ENCODE measurements at regions of chr12 and their contacts with region 1.

Region 1: DNA sequence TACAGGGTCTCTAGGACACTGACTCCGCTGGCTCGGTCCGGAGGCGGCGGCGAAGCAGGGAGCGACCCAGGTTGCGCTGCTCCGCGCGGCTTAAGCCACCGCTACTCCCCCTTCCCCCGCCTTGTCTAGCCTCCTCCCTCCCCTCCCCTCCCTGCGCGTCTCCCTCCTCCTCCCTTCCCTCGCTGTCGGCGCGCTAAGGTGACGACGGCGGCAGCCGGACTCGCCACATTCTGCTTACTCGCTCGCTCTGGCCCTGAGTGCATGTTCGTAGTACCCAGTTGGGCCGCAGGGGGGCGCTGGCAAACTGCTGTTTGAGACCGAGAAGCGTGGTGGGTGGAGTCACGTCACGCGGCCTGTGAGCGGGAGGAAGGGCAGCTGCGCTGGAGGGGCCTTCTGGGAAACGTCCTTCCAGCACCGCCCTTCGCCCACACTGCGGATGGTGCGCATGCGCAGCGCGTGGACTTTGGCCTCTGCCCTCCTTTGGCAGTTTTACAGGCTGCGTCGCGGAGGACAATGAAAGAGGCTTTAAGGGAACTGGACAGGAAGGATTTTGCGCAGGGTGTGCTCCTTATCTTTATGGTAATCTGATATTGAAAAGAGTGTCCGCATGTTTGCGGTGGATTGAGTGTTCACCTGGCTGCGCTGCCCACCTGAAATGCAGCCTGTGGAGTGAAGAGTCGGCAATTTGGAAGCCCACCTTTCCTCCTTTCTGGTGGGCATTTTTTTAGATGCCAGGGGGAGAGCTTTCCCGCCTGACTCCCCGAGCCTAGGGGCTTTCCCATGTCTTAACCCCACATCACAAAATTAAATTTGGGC is at the start of gene SCAF11:
- DNase-seq: peak; percentile 100
- ATAC-seq: peak; percentile 86 to 92 (median 90)
- H3K4me3 ChIP-seq: peak within 1 kb of the TSS; percentile 87
- H3K27ac ChIP-seq: peak within 1 kb of the TSS; percentile 99
- H3K4me1 ChIP-seq: peaks cover 34% of the 10 kb centered on the region
- H3K27me3 ChIP-seq: no peaks in the 10 kb centered on the region
- CTCF ChIP-seq: peak; percentile 91
- total RNA-seq, gene SCAF11: 63.5 to 90.0 (median 75.9) TPM

Region 2: GRCh38 chr12:46450279-46450748 is 459.6 kb after region 1 on chr12:
- intact Hi-C with region 1: loop called in 1 of 2 experiments (anchors 5 kb)
- DNase-seq: peak; percentile 58 to 86
- ATAC-seq: peak; percentile 55 to 91 (median 82)
- H3K4me3 ChIP-seq: no peak overlapping the region
- H3K27ac ChIP-seq: peak overlapping the region; percentile 74
- H3K4me1 ChIP-seq: peaks cover 57% of the 10 kb centered on the region
- H3K27me3 ChIP-seq: no peaks in the 10 kb centered on the region
- CTCF ChIP-seq: no peak

Measured in psoas muscle (tissue), 8 donors.